Panc1 (cell line): ENCODE measurements at regions of chr17 and their contacts with region 1.

Region 1: GRCh38 chr17:41101586-41102259 is at the start of gene KRTAP4-16:
- DNase-seq: no peak
- ATAC-seq: no peak
- H3K4me3 ChIP-seq: no peak within 1 kb of the TSS
- H3K27ac ChIP-seq: no peak within 1 kb of the TSS
- H3K4me1 ChIP-seq: no peaks in the 10 kb centered on the region
- H3K27me3 ChIP-seq: no peaks in the 10 kb centered on the region
- CTCF ChIP-seq: no peak
- total RNA-seq, gene KRTAP4-16: not detected

Region 2: DNA sequence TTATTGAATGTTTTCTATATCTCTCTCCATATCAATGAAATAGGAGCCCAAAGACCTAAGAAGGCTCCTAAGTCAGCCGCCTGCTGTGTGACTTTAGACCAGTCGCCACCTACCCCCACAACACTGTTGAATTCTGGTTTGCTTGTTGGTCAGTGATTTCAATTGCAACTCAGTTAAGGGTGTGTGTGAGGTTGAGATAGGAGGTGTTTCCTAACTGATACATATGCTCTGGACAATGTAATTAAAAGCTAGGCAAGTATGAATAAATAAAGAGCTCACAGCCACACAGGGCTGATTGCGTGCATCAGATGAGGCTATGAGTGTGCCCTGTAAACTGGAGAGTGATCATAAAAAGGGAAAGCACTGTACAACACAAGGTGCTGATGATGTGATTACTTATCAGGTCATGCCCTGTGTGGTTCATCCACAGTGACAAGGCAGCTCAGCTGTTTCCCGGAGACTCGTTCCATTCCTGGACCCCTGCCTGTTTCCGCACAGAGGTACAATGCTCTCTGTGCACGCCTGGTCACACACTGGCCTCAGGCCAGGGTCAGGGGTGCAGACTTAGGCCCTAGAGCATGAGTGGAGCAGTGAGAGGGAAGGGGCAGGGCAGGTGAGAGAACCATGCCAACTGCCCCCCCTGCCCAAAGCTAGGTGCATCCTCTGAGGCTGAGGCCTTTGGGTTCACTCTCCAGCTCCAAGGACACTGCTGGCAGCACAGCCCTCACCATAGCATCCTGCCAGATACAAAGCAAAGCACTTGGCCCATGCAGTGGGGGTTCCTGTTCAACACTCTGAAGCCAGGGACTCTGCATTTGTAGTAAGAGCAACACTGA is 382.5 kb after region 1 on chr17:
- CTCF ChIA-PET with region 1: no interaction called
- POLR2A ChIA-PET with region 1: no interaction called
- in situ Hi-C with region 1: no loop called
- intact Hi-C with region 1: loop called (anchors 5 kb)
- DNase-seq: no peak
- ATAC-seq: peak; percentile 42
- H3K4me3 ChIP-seq: no peak overlapping the region
- H3K27ac ChIP-seq: no peak overlapping the region
- H3K4me1 ChIP-seq: peaks cover 17% of the 10 kb centered on the region
- H3K27me3 ChIP-seq: no peaks in the 10 kb centered on the region
- CTCF ChIP-seq: no peak